ENCODE measurements at regions of chr7 and their contacts with region 1.

Region 1: GRCh38 chr7:117458977-117459583 is 20.7 kb upstream of the CFTR start:
- H3K4me3 ChIP-seq: no peak overlapping the region
- H3K27ac ChIP-seq: no peak overlapping the region
- H3K4me1 ChIP-seq: no peaks in the 10 kb centered on the region
- CTCF ChIP-seq: no peak

Region 2: DNA sequence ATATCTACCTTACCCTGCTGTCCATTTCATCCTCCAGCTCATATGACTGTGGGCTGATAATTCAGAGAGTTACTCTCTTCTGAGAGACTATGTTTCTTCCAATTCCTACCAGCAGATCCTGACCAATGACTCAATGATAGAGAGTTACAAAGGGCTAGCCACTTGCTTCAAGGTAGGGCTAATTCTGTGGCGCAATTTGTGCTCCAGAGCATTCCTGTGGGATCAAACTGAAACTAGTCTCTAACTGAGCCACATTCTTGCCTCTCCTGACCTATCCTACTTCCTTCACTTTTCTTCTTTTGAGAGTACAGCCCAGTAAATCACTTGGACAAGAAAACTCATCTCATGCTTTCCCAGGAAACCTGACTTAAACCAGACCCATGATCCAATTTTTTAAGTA is 13.9 kb before region 1 on chr7:
- CTCF ChIA-PET with region 1: interaction called, 11 read pairs
- POLR2A ChIA-PET with region 1: no interaction called
- H3K4me3 ChIP-seq: no peak overlapping the region
- H3K27ac ChIP-seq: no peak overlapping the region
- H3K4me1 ChIP-seq: no peaks in the 10 kb centered on the region
- CTCF ChIP-seq: no peak

Region 3: GRCh38 chr7:117530390-117530789 is 71.3 kb after region 1 on chr7:
- CTCF ChIA-PET with region 1: no interaction called
- POLR2A ChIA-PET with region 1: no interaction called
- H3K4me3 ChIP-seq: no peak overlapping the region
- H3K27ac ChIP-seq: no peak overlapping the region
- H3K4me1 ChIP-seq: no peaks in the 10 kb centered on the region
- CTCF ChIP-seq: no peak

Region 4: DNA sequence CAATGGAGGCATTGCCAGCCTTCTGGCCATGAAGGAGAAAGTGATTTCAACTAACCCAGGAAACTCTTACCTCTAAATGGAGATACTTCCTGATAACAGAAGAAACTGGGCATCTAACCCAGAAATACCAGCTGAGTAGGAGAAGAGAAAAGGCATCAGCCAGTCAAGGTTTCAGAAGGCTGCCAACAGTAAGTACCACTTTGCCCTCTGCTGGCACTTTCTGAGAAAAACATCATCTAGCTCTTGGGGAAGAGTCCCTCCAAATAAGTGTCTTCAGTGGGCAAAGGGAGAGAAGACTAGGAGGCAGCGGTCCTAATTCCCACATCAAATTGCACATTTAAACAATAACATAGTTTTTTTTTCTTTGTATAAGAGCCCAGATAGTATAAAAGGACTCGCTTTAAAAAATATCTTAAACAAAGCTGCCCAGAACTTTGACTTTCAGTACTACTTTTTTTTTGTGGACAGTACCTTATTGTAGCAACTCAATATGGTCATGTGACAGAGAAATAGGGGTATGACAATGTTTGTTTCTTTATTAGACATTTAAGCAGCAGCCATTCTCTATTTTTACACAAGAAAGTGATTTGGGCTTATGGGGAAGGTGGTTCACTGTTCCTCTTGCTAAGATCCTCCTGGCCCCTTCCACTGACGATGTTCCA is 256.8 kb after region 1 on chr7:
- CTCF ChIA-PET with region 1: interaction called, 21 read pairs
- POLR2A ChIA-PET with region 1: no interaction called
- H3K4me3 ChIP-seq: no peak overlapping the region
- H3K27ac ChIP-seq: no peak overlapping the region
- H3K4me1 ChIP-seq: no peaks in the 10 kb centered on the region
- CTCF ChIP-seq: 0 out of 2 replicates have a peak, but pooled peaks have one; percentile 56

Region 5: GRCh38 chr7:117870448-117871130 is 411.5 kb after region 1 on chr7:
- CTCF ChIA-PET with region 1: no interaction called
- POLR2A ChIA-PET with region 1: no interaction called
- H3K4me3 ChIP-seq: no peak overlapping the region
- H3K27ac ChIP-seq: no peak overlapping the region
- H3K4me1 ChIP-seq: peaks cover 7% of the 10 kb centered on the region; the same call in 1 of the 2 replicates
- CTCF ChIP-seq: no peak